Activated T-helper 2 cell treated with anti-CD3 and anti-CD28 coated beads, Interferon-gamma antibody, Interleukin-2, Interleukin-4, amounts not matched to agents 10 μg/mL and 5 μg/mL and 100 μg/mL, durations not matched to agents 14 hours and 24 hours and 36 hours (primary cell): ENCODE measurements at regions of chr15 and their contacts with region 1.

Region 1: DNA sequence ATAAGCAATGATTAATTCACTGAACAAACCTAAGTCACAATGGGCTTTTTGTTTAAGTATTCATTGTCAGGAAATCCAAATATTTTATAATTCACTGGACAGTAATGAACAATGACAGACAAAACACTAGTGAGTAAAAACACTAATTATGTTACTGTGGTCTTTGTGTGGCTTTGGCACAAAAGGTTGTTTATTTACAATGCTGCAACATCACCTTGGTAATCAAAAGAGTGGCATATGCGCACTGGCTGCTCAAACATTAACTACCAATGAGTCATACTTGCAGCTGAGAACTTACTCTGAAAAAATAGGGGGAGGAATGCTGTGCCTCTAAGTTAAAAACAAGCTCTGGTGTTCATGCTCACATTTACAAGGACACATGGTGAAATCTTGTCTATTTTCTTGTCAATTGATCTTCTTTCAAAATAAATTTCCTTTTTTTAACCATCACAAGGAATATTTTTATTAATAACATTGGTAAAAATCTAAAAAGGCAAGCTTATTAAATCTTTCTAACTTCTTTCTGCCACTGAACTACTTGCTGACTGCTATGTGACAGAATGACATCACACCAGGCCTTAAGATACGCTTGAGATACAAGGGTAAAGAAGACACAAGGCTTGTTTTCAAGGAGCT is 85.2 kb upstream of the PPIB start:
- DNase-seq: peak; percentile 22
- H3K4me3 Mint-ChIP-seq: no peak overlapping the region
- H3K27ac Mint-ChIP-seq: peak overlapping the region; percentile 47
- H3K4me1 Mint-ChIP-seq: peaks cover 48% of the 10 kb centered on the region
- H3K27me3 Mint-ChIP-seq: no peaks in the 10 kb centered on the region

Region 2: GRCh38 chr15:64093627-64094417 is 154.2 kb before region 1 on chr15 and contains the start of gene CIAO2A:
- intact Hi-C with region 1: no loop called
- DNase-seq: peak; percentile 93
- H3K4me3 Mint-ChIP-seq: peak within 1 kb of the TSS; percentile 94
- H3K27ac Mint-ChIP-seq: peak within 1 kb of the TSS; percentile 92
- H3K4me1 Mint-ChIP-seq: peaks cover 50% of the 10 kb centered on the region
- H3K27me3 Mint-ChIP-seq: no peaks in the 10 kb centered on the region
- total RNA-seq, gene CIAO2A: 76.1 and 78.3 TPM in 2 replicates

Region 3: GRCh38 chr15:64180235-64180837 is 67.7 kb before region 1 on chr15:
- intact Hi-C with region 1: no loop called
- DNase-seq: no peak
- H3K4me3 Mint-ChIP-seq: no peak overlapping the region
- H3K27ac Mint-ChIP-seq: no peak overlapping the region
- H3K4me1 Mint-ChIP-seq: no peaks in the 10 kb centered on the region
- H3K27me3 Mint-ChIP-seq: no peaks in the 10 kb centered on the region

Region 4: DNA sequence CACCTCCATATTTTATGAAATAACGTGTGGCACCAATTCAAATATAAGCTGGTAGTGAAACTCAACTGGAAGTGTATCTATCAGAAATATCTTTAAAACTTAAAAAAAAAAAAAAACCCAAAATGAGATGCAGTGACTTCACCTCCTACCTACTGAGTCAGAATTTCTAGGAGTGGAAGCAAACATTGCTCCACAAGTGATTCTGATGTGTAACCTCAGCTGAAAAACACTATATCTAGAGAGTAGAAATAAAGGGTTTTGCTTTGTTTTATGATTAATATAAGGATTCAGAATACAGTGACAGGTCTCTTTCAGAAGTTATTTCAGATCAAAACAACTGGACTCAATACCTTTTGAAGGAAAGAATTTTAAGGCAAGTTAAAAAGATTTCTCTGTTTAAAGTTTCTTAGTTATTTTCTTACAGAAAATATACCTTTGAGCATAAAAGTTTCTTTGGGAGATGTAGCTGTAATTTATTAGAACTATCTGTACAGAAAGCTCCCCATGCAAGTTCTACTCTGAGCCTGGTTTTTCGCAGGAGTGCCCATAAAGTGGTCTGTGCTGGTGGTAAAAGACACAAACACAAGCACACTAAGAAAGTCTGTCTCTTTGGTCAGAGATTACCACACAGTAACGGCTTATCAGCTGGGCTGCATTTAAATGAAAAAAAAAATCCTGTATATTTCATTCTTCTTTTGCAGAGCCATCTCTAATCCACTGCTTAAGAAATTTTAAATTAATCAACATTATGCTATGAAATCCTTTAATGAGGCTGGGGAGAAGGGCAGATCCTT is 25.3 kb before region 1 on chr15:
- intact Hi-C with region 1: loop called (anchors 2 kb)
- DNase-seq: no peak
- H3K4me3 Mint-ChIP-seq: no peak overlapping the region
- H3K27ac Mint-ChIP-seq: peak overlapping the region; percentile 17
- H3K4me1 Mint-ChIP-seq: peaks cover 17% of the 10 kb centered on the region
- H3K27me3 Mint-ChIP-seq: no peaks in the 10 kb centered on the region

Region 5: DNA sequence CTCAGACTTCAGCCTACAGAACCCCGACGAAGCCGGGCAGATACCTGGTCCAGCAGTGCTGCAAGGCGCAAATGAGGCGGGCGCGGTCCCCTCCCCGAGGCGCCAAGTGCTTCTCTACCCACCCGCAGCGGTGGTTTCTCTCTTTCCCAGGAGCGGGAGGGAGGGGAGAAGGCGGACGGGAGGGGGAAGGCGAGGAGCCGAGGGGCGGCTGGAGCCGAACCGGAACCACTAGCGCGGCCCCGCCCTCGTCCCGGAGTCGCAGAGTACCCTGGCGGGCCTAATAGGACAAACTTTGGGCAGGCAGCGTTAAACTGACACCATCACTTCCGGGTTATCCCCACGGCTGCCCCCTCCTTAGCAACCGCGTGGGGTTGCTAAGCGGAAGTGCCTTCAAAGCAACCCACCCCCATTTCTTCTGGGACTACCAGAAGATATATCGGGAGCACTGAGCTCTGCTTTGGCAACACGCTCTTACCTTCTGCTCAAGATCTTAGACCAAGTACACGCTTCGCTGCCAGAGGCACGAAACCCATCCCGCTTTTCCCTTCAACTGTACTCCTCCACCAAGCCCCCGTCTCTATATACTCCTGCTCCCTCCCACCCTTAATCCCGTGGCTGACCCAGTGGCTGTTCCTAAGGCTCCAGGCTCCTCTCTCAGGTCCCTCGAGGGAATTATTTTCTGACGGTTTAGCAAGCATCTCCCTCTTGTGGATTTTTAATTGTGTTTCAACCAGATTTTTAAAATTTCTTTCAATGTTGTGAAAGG is 108.1 kb after region 1 on chr15 and contains the start of gene CSNK1G1:
- intact Hi-C with region 1: loop called (anchors 10 kb)
- DNase-seq: peak; percentile 88
- H3K4me3 Mint-ChIP-seq: peak within 1 kb of the TSS; percentile 95
- H3K27ac Mint-ChIP-seq: peak within 1 kb of the TSS; percentile 95
- H3K4me1 Mint-ChIP-seq: peaks cover 21% of the 10 kb centered on the region
- H3K27me3 Mint-ChIP-seq: no peaks in the 10 kb centered on the region
- total RNA-seq, gene CSNK1G1: 31.8 and 34.8 TPM in 2 replicates

Region 6: GRCh38 chr15:64412216-64412615 is 164.2 kb after region 1 on chr15:
- intact Hi-C with region 1: no loop called
- DNase-seq: no peak
- H3K4me3 Mint-ChIP-seq: no peak overlapping the region
- H3K27ac Mint-ChIP-seq: no peak overlapping the region
- H3K4me1 Mint-ChIP-seq: peaks cover 3% of the 10 kb centered on the region
- H3K27me3 Mint-ChIP-seq: no peaks in the 10 kb centered on the region

Region 7: DNA sequence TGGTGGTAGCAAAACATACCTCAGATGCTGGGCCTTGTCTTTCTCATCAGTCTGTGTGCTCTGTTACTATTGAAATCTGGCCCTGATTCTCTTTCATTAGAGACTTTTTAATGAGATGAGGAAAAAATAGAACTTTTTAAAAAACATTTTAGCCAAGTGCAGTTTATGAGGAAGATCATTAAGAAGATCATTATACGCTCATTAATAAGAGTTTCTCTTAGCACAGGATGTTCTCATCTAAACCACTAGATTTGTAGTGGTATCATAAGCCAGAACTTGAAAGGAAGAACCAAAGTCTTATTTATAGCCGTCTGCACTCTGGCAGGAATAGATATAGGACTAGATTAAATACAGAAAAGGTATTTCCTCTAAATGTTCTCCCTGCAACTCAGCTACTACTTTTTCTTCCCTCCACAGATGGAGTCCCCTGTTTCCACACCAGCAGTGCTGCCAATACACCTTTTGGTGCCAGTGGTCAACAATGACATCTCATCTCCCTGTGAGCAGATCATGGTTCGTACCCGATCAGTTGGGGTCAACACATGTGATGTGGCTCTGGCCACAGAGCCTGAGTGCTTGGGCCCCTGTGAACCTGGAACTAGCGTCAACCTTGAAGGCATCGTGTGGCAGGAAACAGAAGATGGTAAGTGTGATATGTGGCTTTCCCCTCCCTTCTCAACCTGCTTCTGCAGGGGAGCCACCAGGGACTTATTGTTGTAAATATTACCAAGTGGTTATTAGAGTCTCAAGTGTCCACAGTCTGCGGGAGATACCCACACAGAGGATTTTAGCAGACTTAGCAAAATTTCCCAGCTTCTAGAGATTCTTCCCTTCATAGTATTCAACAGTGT is 374.6 kb after region 1 on chr15:
- intact Hi-C with region 1: loop called (anchors 10 kb)
- DNase-seq: peak; percentile 60
- H3K4me3 Mint-ChIP-seq: peak overlapping the region; percentile 59
- H3K27ac Mint-ChIP-seq: peak overlapping the region; percentile 92
- H3K4me1 Mint-ChIP-seq: peaks cover 74% of the 10 kb centered on the region
- H3K27me3 Mint-ChIP-seq: no peaks in the 10 kb centered on the region

Region 8: GRCh38 chr15:65044724-65045481 is 796.9 kb after region 1 on chr15 and contains the start of gene SLC51B:
- intact Hi-C with region 1: no loop called
- DNase-seq: no peak
- H3K4me3 Mint-ChIP-seq: no peak within 1 kb of the TSS
- H3K27ac Mint-ChIP-seq: no peak within 1 kb of the TSS
- H3K4me1 Mint-ChIP-seq: peaks cover 9% of the 10 kb centered on the region
- H3K27me3 Mint-ChIP-seq: peaks cover 8% of the 10 kb centered on the region
- total RNA-seq, gene SLC51B: not detected in 2 replicates